Dorsolateral prefrontal cortex (tissue), 120 donors: ENCODE measurements at regions of chr5 and their contacts with region 1.

Region 1: DNA sequence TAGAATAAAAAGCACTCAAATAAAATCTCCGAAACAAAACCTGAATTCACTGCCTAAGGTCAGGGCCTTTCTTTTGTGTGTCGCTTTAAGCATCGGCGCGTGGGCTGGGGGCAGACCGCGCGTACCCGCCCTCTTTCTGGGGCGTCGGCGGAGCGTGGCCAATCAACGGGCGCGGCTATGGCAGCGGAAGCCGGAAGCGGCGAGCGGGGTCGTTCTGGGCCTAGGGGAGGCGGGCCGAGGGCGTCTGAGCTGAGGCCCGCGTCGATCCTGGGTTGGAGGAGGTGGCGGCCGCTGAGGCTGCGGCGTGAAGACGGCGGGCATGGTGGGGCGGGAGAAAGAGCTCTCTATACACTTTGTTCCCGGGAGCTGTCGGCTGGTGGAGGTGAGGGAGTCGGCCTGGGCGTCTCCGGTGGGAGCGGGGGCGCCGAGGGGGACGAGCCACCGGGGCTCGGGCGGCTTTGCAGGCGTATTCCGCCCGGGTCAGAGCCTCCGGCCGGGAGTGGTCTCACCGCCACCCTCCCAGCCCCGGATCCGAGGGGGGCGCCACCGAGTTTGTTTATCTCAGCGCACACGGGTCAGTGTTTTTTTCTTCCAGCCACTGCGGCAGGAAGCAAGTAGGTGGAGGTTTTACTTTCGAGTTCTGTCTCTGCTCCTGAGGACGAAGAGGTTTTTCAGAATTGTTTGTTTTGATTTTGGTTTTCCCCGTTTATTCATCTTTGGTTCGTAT is at the start of gene MAT2B:
- DNase-seq: peak; percentile 90 to 97 (median 94)
- H3K4me3 ChIP-seq: peak within 1 kb of the TSS; percentile 59 to 99 (median 86)
- H3K27ac ChIP-seq: peak within 1 kb of the TSS; percentile 86 to 99 (median 97)
- H3K27me3 ChIP-seq: no peaks in the 10 kb centered on the region
- CTCF ChIP-seq: peak in 55 of 56 donors; percentile 18 to 75 (median 56)
- total RNA-seq, gene MAT2B: 35.8 to 90.1 (median 67.1) TPM

Region 2: DNA sequence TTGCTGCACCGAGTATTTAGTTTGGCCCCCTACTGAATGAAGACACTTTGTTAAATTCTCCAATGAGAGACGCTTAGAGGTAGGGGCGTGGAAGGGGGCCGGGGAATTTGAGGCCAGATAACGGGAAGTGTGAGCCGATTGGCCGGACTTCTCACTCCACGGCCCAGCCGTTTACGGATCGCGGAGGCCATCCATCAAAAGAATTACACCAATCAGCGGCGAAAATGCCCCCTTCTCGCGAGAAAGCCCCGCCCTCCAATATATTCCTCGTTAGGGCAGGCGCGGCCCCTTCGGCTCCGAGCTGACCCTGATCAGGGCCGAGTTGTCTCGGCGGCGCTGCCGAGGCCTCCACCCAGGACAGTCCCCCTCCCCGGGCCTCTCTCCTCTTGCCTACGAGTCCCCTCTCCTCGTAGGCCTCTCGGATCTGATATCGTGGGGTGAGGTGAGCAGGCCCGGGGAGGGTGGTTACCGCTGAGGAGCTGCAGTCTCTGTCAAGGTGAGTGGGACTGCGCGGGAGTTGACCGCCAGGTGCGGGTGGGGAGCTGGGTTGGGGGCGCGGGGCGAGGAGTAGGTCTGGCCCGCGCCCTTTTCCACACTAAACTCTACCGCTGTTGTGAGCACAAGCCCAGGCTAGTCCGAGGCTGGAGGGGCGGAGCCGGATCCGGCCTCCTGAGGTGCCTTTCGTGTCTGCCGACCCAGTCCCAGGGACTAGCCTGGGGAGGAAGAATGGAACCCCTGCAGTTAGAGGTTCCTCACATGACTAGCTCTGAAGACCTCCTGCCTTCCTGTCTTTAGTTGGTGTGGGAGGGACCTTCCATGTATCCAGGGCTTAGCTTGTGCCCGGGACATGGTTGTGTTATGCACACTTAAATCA is 68.0 kb before region 1 on chr5 and contains the start of gene CCNG1:
- intact Hi-C with region 1: loop called in 1 of 2 experiments (anchors 1 kb)
- DNase-seq: peak; percentile 87 to 97 (median 96)
- H3K4me3 ChIP-seq: peak within 1 kb of the TSS; percentile 70 to 98 (median 91)
- H3K27ac ChIP-seq: peak within 1 kb of the TSS; percentile 49 to 96 (median 85)
- H3K27me3 ChIP-seq: no peaks in the 10 kb centered on the region
- CTCF ChIP-seq: peak in 20 of 56 donors; percentile 3 to 49 (median 15)
- total RNA-seq, gene CCNG1: 30.0 to 88.2 (median 49.4) TPM

Region 3: DNA sequence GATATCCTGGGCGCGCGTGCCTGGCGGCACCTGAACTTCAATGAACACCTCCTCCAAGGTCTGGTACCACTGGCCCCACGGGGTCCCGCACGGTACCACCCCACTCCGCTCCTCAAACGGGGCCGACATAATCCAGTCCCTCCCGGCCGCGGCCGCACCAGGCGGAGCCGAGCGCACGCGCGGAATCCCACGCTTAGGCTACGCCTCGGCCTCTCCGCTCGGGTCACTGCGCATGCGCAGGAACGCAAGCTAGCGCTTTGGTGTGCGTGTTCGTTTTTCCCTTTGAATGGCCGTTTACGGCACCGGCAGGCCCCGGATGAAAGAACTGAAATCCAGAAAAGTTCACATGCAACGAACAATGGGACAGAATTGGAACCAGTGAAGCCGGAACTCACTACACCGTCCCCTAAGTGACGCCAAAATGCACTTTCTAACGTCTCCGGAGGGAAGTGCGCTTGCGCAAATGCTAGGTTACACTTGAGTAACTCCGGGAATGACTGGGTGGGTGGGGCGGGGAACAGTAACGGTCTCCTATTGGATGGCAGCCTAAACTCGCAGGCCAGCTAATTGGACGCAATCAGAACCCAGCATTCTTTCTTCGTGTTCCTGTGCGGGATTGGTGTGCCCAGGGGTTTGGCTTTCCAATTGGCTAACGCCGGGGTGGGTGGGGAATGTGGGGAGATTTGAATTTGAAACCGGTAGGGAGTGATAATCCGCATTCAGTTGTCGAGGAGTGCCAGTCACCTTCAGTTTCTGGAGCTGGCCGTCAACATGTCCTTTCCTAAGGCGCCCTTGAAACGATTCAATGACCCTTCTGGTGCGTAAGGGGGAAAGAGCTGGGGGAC is 45.4 kb before region 1 on chr5 and contains the starts of genes HMMR and NUDCD2:
- intact Hi-C with region 1: loop called (anchors 1 kb)
- DNase-seq: peak; percentile 91 to 98 (median 96)
- H3K4me3 ChIP-seq: peak within 1 kb of the TSS; percentile 69 to 99 (median 88)
- H3K27ac ChIP-seq: peak within 1 kb of the TSS; percentile 88 to 100 (median 98)
- H3K27me3 ChIP-seq: no peaks in the 10 kb centered on the region
- CTCF ChIP-seq: peak in 45 of 56 donors; percentile 21 to 64 (median 44)
- total RNA-seq, gene HMMR: 0.15 to 2.6 (median 0.63) TPM in 110 of 120 experiments, not detected in the others
- total RNA-seq, gene NUDCD2: 24.1 to 54.3 (median 33.8) TPM